ENCODE measurements at regions of chr11 and their contacts with region 1.

Region 1: GRCh38 chr11:60906132-60906972 is at the start of gene PRPF19:
- DNase-seq: peak; percentile 100
- H3K4me3 Mint-ChIP-seq: peak within 1 kb of the TSS; percentile 80
- H3K27ac Mint-ChIP-seq: peak within 1 kb of the TSS; percentile 92
- H3K4me1 Mint-ChIP-seq: peaks cover 40% of the 10 kb centered on the region
- H3K27me3 Mint-ChIP-seq: no peaks in the 10 kb centered on the region
- total RNA-seq, gene PRPF19: 108 to 119 TPM

Region 2: DNA sequence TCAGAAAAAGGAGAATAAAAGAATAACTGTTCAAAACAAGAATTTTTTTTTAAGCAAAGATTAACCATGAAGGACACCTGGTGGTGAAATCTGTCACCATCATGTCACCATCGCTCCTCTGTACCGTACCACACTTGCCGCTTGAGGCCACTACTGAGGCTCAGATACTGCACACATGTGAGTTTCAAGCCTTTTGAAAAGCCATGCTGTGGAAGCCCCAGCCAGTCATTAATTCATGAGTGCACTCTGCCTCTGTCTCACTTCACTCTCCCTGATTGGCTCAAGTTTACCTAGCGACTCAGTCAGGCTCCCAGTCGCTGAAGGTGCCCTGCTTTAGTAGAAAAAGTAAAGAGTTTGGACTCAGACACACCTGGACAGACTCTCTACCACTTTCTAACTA is 420.4 kb before region 1 on chr11:
- CTCF ChIA-PET with region 1: no interaction called
- intact Hi-C with region 1: no loop called
- DNase-seq: peak; percentile 38
- H3K4me3 Mint-ChIP-seq: no peak overlapping the region
- H3K27ac Mint-ChIP-seq: no peak overlapping the region
- H3K4me1 Mint-ChIP-seq: peaks cover 4% of the 10 kb centered on the region
- H3K27me3 Mint-ChIP-seq: no peaks in the 10 kb centered on the region

Region 3: GRCh38 chr11:60924906-60925853 is 18.8 kb after region 1 on chr11:
- CTCF ChIA-PET with region 1: no interaction called
- intact Hi-C with region 1: no loop called
- DNase-seq: peak; percentile 18
- H3K4me3 Mint-ChIP-seq: peak overlapping the region; percentile 30
- H3K27ac Mint-ChIP-seq: no peak overlapping the region
- H3K4me1 Mint-ChIP-seq: peaks cover 15% of the 10 kb centered on the region
- H3K27me3 Mint-ChIP-seq: peaks cover 13% of the 10 kb centered on the region

Region 4: GRCh38 chr11:61161190-61162091 is 255.1 kb after region 1 on chr11 and contains the start of gene VPS37C:
- CTCF ChIA-PET with region 1: interaction called, 3 read pairs
- intact Hi-C with region 1: loop called (anchors 1 kb)
- DNase-seq: peak; percentile 91
- H3K4me3 Mint-ChIP-seq: peak within 1 kb of the TSS; percentile 94
- H3K27ac Mint-ChIP-seq: peak within 1 kb of the TSS; percentile 93
- H3K4me1 Mint-ChIP-seq: peaks cover 62% of the 10 kb centered on the region
- H3K27me3 Mint-ChIP-seq: no peaks in the 10 kb centered on the region
- total RNA-seq, gene VPS37C: 8.5 to 8.9 TPM

Region 5: DNA sequence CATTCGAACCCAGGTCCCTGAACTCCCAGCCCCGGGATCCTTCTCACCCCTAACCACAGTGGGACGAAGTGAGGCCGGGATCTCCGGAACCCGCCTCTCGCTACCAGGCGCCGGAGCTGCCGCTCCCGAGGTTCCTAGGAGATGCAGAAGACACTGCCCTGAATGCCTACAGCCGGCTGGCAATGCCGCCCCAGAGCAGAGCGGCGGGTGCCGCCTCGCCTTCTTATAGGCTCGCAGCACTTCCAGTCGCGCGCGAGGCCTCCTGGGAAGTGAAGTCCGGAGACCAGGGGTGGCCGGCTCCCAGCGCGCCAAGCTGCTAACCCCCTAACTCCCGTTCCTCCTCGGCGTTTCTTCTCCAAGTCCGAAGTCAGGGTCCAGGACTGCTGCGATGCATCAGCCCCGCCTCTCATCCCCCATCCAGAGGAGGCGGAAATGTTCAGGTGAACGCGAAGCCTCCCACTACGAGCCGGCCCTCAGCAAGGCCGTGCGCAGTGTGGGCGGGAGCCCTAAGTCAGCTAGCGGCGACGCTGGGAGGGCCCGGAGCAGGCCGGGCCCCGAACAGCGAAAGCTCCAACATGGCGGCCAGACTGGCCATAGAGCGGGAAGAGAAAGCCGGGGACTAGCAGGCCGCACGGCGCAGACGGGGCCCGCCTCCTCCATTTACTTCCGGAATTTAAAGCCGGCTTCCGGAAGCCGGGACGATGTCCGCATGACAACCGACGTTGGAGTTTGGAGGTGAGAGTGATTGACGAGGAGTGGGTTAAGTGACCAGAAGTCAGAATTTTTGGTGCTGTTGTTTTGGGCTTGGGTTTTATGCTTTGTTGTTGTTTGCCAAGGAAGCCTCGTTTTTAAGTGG is 455.6 kb after region 1 on chr11 and contains the starts of genes CYB561A3 and TMEM138:
- CTCF ChIA-PET with region 1: no interaction called
- intact Hi-C with region 1: loop called (anchors 1 kb)
- DNase-seq: peak; percentile 94
- H3K4me3 Mint-ChIP-seq: peak within 1 kb of the TSS; percentile 100
- H3K27ac Mint-ChIP-seq: peak within 1 kb of the TSS; percentile 96
- H3K4me1 Mint-ChIP-seq: peaks cover 42% of the 10 kb centered on the region
- H3K27me3 Mint-ChIP-seq: no peaks in the 10 kb centered on the region
- total RNA-seq, gene CYB561A3: 31.7 to 31.8 TPM
- total RNA-seq, gene TMEM138: 35.6 to 41.4 TPM